ENCODE measurements at regions of chr5 and their contacts with region 1.

Region 1: GRCh38 chr5:170278611-170279452 is 18.7 kb downstream of the LCP2 start:
- DNase-seq: peak; percentile 93
- ATAC-seq: peak; percentile 73
- H3K4me3 Mint-ChIP-seq: peak overlapping the region; percentile 48
- H3K27ac Mint-ChIP-seq: peak overlapping the region; percentile 90
- H3K4me1 Mint-ChIP-seq: peaks cover 97% of the 10 kb centered on the region
- H3K27me3 Mint-ChIP-seq: no peaks in the 10 kb centered on the region

Region 2: GRCh38 chr5:170293273-170293672 is 14.4 kb after region 1 on chr5:
- CTCF ChIA-PET with region 1: interaction called, 180 read pairs
- POLR2A ChIA-PET with region 1: interaction called, 28 read pairs
- intact Hi-C with region 1: loop called (anchors 1 kb)
- DNase-seq: peak; percentile 70
- ATAC-seq: peak; percentile 16
- H3K4me3 Mint-ChIP-seq: peak overlapping the region; percentile 88
- H3K27ac Mint-ChIP-seq: peak overlapping the region; percentile 97
- H3K4me1 Mint-ChIP-seq: peaks cover 72% of the 10 kb centered on the region
- H3K27me3 Mint-ChIP-seq: no peaks in the 10 kb centered on the region

Region 3: DNA sequence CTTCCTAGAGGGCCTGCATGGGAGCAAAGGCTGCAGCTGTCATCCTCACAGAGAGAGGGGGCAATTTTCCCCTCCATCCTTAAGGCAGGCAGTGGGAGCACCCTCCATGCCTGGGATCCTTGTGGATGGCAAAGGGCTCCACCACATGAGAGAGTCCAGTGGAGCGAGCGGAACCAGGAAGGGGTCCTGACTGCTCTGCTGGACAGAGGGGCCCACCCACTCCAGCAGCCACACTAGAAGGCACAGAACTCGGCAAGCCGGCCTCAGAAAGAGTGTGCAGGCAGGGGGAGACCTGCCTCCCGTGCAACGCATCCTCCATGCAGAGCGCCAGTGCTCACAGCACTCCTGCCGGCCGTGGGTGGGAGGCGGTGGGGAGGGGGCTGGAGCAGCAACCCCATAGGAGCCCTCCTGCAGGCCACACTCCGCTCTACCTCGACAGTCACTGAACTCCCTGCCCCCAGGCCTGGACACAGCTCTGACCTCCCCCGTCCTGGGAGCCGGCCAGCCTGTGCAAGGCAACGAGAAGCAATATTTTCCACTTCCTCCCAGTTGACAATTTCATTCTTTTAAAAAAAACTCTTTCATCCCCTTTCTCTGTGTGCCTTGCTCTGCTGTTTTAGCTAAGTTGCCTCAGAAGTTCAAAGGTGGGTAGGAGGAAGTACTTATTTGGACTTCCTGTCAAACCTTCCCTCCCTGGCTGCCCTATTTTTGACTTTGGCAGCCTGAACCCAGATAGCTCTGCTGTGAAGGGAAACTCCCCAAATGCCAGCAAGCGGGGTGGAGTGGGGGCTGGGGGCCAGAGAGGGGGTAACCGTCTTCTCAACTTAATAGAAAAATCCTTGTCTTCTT is 24.0 kb after region 1 on chr5:
- CTCF ChIA-PET with region 1: interaction called, 180 read pairs
- POLR2A ChIA-PET with region 1: interaction called, 28 read pairs
- intact Hi-C with region 1: no loop called
- DNase-seq: peak; percentile 75
- ATAC-seq: peak; percentile 87
- H3K4me3 Mint-ChIP-seq: peak overlapping the region; percentile 70
- H3K27ac Mint-ChIP-seq: peak overlapping the region; percentile 92
- H3K4me1 Mint-ChIP-seq: peaks cover 91% of the 10 kb centered on the region
- H3K27me3 Mint-ChIP-seq: no peaks in the 10 kb centered on the region

Region 4: GRCh38 chr5:171387345-171387969 is 1108.6 kb after region 1 on chr5 and contains the start of gene NPM1:
- CTCF ChIA-PET with region 1: no interaction called
- POLR2A ChIA-PET with region 1: interaction called, 4 read pairs
- intact Hi-C with region 1: loop called in 1 of 2 experiments (anchors 10 kb)
- DNase-seq: peak; percentile 99
- ATAC-seq: peak; percentile 83
- H3K4me3 Mint-ChIP-seq: peak within 1 kb of the TSS; percentile 88
- H3K27ac Mint-ChIP-seq: peak within 1 kb of the TSS; percentile 99
- H3K4me1 Mint-ChIP-seq: peaks cover 37% of the 10 kb centered on the region
- H3K27me3 Mint-ChIP-seq: no peaks in the 10 kb centered on the region
- total RNA-seq, gene NPM1: 3,156 to 3,905 TPM